ENCODE measurements at regions of chr1 and their contacts with region 1.

Region 1: DNA sequence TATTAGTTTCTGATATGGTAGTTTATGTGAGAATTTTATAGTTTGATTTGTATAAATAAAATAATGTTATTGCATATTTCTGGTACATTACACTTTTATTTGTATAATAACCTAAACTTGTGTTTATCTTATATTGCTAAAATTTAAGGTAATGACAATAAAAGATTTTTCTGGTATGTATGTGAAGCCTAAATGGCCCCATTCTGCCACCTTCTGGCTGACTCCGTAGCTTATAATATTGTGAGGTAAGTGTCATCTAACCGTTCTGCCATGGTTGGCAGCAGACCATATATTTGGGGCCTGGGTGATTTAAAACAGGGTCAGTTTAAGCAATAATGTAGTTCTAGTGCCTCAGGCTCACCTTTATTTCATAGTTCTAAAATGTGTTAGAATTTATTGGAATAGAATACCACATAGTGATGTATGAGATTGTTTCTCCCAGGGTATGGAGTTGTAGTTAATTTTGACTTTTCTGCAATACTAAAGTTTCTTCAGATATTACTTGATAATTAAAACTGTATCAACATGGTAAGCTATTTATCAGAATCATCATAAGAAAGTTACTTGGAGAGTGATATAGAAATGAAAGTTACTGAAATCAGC is 21.2 kb upstream of the PRKACB start:
- DNase-seq: no peak
- H3K4me3 Mint-ChIP-seq: no peak overlapping the region
- H3K27ac Mint-ChIP-seq: no peak overlapping the region
- H3K4me1 Mint-ChIP-seq: no peaks in the 10 kb centered on the region
- H3K27me3 Mint-ChIP-seq: no peaks in the 10 kb centered on the region

Region 2: DNA sequence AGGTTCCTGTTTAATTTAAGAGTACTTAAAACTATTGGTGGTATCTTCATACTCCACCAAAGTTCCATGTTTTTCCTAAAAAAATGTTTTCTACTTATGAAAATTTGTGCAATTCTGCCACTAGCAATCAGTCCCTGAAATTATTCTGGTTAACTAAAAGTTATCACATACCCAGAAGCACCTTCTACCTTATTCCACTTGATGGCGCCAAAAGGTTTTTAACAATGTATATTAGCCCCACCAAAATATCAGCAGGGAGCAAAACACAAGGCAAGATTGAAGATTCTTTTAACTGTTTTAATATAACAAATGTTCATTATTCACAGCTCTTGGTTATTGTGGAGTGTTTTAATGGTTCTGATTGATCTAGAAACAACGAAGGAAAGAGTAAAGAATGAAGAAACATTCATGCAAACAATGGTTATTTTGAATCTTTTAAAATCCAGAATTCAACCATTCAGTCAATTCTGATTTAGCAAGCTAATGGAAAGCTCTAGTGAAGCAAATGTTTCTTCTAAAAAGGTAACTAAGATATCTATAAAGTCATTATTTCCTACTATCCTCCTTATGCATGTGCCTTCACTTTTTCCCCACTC is 191.1 kb before region 1 on chr1:
- intact Hi-C with region 1: loop called (anchors 1 kb)
- DNase-seq: no peak
- H3K4me3 Mint-ChIP-seq: no peak overlapping the region
- H3K27ac Mint-ChIP-seq: no peak overlapping the region
- H3K4me1 Mint-ChIP-seq: no peaks in the 10 kb centered on the region
- H3K27me3 Mint-ChIP-seq: peaks cover 8% of the 10 kb centered on the region

Region 3: GRCh38 chr1:83998498-83999315 is 124.2 kb before region 1 on chr1 and contains the start of gene TTLL7:
- intact Hi-C with region 1: loop called (anchors 5 kb)
- DNase-seq: peak; percentile 62
- H3K4me3 Mint-ChIP-seq: peak within 1 kb of the TSS; percentile 89
- H3K27ac Mint-ChIP-seq: peak within 1 kb of the TSS; percentile 56
- H3K4me1 Mint-ChIP-seq: peaks cover 24% of the 10 kb centered on the region
- H3K27me3 Mint-ChIP-seq: peaks cover 60% of the 10 kb centered on the region
- total RNA-seq, gene TTLL7: 0.15 and 0.29 TPM in 2 replicates

Measured in activated T-helper 1 cell treated with anti-CD3 and anti-CD28 coated beads, Interleukin-12 subunit alpha, Interleukin-12 subunit beta, Interleukin-2, Interleukin-4 antibody, amounts not matched to agents 30 ng/mL and 10 ng/mL and 1 ng/mL, durations not matched to agents 14 hours and 24 hours and 36 hours (primary cell).